A673 (cell line): ENCODE measurements at regions of chr4 and their contacts with region 1.

Region 1: DNA sequence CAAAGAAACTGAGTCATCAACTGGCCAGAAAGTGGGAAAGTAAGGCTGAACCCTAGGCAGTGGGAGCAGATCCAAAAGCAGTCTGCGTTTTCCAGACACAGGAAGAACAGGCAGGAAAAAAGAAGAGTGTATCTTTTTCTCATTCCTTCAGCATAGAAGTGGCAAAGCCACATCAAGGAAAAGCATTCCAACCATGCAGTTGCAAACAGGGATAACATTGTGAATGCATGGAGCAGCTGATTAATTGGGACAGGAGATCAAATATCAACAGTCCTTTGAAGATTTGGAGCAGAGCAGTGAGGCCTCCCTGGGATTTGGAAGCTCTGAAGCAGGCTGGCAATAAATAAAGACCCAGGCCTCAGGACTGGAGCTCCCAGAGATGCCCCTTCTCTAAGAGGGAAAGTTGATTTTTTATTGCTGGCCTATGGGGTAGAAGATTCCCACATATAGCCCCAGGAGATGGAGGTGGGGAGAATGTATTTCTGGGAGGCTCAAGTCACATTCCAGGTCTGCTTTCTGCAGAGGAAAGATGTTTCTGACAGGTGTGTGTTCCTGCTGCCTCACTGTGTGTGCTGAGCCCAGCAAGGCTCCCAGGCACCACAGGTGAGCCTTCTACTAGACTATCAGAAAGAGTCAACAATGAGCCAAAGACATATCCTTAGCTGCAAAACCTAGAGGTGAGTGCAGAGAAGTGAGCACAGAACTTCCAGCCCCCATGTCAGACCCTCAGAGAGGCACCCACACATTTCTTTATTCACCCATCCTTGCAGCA is 222.5 kb downstream of the RAB28 start:
- DNase-seq: no peak
- H3K4me3 ChIP-seq: no peak overlapping the region
- H3K27ac ChIP-seq: no peak overlapping the region
- H3K4me1 ChIP-seq: no peaks in the 10 kb centered on the region
- H3K27me3 ChIP-seq: no peaks in the 10 kb centered on the region
- CTCF ChIP-seq: no peak

Region 2: GRCh38 chr4:12897954-12898353 is 363.7 kb before region 1 on chr4:
- CTCF ChIA-PET with region 1: no interaction called
- POLR2A ChIA-PET with region 1: no interaction called
- intact Hi-C with region 1: no loop called
- DNase-seq: no peak
- H3K4me3 ChIP-seq: no peak overlapping the region
- H3K27ac ChIP-seq: no peak overlapping the region
- H3K4me1 ChIP-seq: no peaks in the 10 kb centered on the region
- H3K27me3 ChIP-seq: no peaks in the 10 kb centered on the region
- CTCF ChIP-seq: no peak

Region 3: GRCh38 chr4:13570916-13571315 is 309.2 kb after region 1 on chr4:
- CTCF ChIA-PET with region 1: interaction called, 14 read pairs
- POLR2A ChIA-PET with region 1: no interaction called
- intact Hi-C with region 1: no loop called
- DNase-seq: no peak
- H3K4me3 ChIP-seq: no peak overlapping the region
- H3K27ac ChIP-seq: no peak overlapping the region
- H3K4me1 ChIP-seq: no peaks in the 10 kb centered on the region
- H3K27me3 ChIP-seq: no peaks in the 10 kb centered on the region
- CTCF ChIP-seq: no peak